Motor neuron (in vitro differentiated cells): ENCODE measurements at regions of chr6 and their contacts with region 1.

Region 1: GRCh38 chr6:161370880-161371279 is 97.0 kb upstream of the AGPAT4 start:
- ATAC-seq: peak; percentile 24 to 73 (median 66)
- H3K4me3 ChIP-seq: no peak overlapping the region
- H3K27ac ChIP-seq: no peak overlapping the region
- H3K4me1 ChIP-seq: peaks cover 0 to 2% of the 10 kb centered on the region in 2 donors

Region 2: GRCh38 chr6:160534050-160534696 is 836.7 kb before region 1 on chr6:
- in situ Hi-C with region 1: loop called in 1 of 9 experiments (anchors 25 kb)
- ATAC-seq: peak; percentile 52 to 86 (median 68)
- H3K4me3 ChIP-seq: no peak overlapping the region
- H3K27ac ChIP-seq: no peak overlapping the region
- H3K4me1 ChIP-seq: no peaks in the 10 kb centered on the region

Region 3: GRCh38 chr6:160733050-160733646 is 637.7 kb before region 1 on chr6:
- in situ Hi-C with region 1: loop called in 6 of 9 experiments (anchors 10 to 25 kb)
- ATAC-seq: peak; percentile 66 to 98 (median 84)
- H3K4me3 ChIP-seq: no peak overlapping the region
- H3K27ac ChIP-seq: no peak overlapping the region
- H3K4me1 ChIP-seq: no peaks in the 10 kb centered on the region

Region 4: DNA sequence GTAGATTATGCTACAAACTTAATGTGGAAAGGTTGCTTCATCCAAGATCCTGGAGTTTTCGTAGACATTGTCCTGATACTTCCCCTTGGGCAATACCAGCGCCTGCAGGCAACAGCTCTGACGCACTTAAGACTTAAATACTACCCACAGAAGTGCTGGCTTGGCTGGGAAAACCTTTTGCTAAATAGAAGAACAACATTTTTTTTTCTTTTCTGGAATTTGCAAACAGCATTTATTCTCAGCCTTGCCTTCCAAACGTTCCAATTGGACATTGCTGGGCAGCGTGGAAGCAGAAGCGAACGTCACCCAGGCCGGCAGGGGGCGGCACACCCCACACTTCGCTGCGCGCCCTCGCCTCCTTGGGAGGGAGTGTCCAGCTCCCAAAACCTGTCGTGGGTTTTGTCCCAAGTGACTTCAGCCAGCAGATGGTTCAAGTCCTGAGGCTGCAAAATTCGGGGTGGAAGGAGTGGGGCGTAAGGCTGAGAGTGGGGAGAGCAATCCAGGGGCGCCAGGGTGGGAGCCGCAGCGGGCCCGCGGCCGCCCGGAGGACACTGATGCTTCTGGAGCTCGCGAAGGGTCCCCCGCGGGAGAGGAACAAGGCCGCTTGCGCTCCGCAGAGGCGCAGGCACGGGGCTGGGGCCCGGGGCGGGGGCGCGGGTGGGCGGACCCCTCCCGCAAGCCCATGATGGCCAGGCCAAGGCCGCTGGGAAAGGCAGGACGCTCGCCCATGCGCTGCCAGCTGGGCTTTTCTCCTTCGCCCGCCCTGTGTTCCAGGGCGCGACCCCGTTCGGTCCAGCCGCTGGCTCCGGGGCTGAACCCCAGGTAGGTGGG is 440.1 kb before region 1 on chr6:
- in situ Hi-C with region 1: loop called (anchors 10 to 25 kb)
- ATAC-seq: peak; percentile 96 to 99 (median 97)
- H3K4me3 ChIP-seq: peak overlapping the region; percentile 45 to 72 (median 47)
- H3K27ac ChIP-seq: no peak overlapping the region
- H3K4me1 ChIP-seq: peaks cover 0 to 7% of the 10 kb centered on the region in 2 donors

Region 5: DNA sequence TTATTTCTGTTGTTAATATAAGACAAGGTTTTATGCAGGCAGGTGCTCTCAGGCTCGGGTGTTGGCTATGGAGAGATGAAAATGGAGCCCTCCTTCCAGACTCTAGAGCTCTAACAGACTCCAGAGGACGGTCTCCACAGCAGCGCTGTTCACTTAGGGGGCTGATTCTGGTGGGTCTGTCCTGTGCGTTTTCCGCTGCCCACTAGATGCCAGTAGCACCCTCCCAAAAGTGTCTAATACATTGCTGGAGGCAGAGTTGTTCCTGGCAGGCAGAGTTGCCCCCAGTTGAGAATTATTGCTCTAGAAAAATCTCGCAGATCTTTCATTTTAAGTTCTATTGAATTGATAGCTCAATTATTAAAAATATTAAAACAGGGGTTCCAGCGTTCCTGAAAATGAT is 269.4 kb before region 1 on chr6:
- in situ Hi-C with region 1: loop called in 3 of 9 experiments (anchors 25 kb)
- ATAC-seq: peak in 6 of 8 experiments; percentile 34 to 78 (median 46)
- H3K4me3 ChIP-seq: no peak overlapping the region
- H3K27ac ChIP-seq: no peak overlapping the region
- H3K4me1 ChIP-seq: no peaks in the 10 kb centered on the region

Region 6: GRCh38 chr6:161139766-161140553 is 230.9 kb before region 1 on chr6:
- in situ Hi-C with region 1: loop called in 1 of 9 experiments (anchors 25 kb)
- ATAC-seq: peak; percentile 21 to 93 (median 54)
- H3K4me3 ChIP-seq: no peak overlapping the region
- H3K27ac ChIP-seq: no peak overlapping the region
- H3K4me1 ChIP-seq: peaks cover 0 to 7% of the 10 kb centered on the region in 2 donors

Region 7: DNA sequence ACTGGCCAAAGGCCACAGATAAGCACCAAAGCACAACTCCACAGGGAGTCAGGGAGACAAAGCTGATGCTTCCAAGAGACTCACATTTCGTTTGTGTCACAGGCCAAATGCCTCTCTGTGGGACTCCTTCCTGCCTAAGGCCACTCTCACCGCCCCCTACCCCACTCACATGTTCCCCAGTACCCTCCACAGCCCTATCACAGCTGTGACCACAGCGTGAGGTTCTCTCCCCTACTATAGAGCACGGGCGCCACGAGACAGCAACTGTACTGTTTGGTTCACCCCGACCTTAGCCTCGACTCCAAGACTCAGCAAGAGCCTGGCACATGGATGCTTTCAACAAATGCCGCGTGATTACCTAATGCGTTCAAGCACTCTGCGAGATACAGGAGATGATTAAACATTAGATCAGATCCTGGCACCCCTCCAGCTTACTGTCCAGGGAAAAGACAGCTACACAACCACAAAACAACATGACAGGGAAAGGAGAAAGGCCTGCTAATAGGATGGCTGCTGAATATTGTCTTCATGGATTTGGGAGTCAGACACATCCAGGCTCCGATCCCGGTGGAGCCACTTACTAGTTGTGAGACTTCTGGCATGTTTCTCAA is 202.5 kb before region 1 on chr6:
- in situ Hi-C with region 1: loop called in 1 of 9 experiments (anchors 25 kb)
- ATAC-seq: peak in 7 of 8 experiments; percentile 56 to 84 (median 78)
- H3K4me3 ChIP-seq: no peak overlapping the region
- H3K27ac ChIP-seq: peak overlapping the region; percentile 27 to 37
- H3K4me1 ChIP-seq: peaks cover 4 to 8% of the 10 kb centered on the region in 2 donors

Region 8: DNA sequence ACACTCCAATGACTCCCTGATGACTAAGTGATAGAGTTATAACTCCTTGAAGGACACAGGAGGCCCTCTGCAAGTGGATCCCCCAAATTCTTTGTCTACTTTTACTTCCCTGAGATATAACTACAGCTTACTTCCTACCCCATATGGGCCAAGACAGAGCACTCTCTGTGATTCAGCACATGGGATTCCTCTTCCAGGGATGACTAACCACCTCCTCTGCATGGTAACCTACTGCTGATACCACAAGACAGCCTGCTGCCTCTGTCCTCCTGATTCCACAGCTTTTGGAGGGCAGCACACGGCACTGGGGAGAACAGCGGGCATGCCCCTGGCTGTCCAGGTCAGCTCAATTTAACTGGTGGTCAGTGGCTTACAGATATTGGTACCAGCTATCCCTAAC is 578.7 kb after region 1 on chr6:
- in situ Hi-C with region 1: no loop called
- ATAC-seq: no peak
- H3K4me3 ChIP-seq: no peak overlapping the region
- H3K27ac ChIP-seq: no peak overlapping the region
- H3K4me1 ChIP-seq: peaks cover 8 to 16% of the 10 kb centered on the region in 2 donors